HepG2 (cell line): ENCODE measurements at regions of chr15 and their contacts with region 1.

Region 1: GRCh38 chr15:32936283-32936918 is 218.6 kb downstream of the GREM1 start:
- DNase-seq: peak; percentile 16
- ATAC-seq: peak; percentile 68
- H3K4me3 ChIP-seq: no peak overlapping the region
- H3K27ac ChIP-seq: no peak overlapping the region
- H3K4me1 ChIP-seq: no peaks in the 10 kb centered on the region
- H3K27me3 ChIP-seq: no peaks in the 10 kb centered on the region
- CTCF ChIP-seq: peak; percentile 53
- EP300 ChIP-seq: no peak
- POLR2A ChIP-seq: no peak
- RAD21 ChIP-seq: no peak

Region 2: DNA sequence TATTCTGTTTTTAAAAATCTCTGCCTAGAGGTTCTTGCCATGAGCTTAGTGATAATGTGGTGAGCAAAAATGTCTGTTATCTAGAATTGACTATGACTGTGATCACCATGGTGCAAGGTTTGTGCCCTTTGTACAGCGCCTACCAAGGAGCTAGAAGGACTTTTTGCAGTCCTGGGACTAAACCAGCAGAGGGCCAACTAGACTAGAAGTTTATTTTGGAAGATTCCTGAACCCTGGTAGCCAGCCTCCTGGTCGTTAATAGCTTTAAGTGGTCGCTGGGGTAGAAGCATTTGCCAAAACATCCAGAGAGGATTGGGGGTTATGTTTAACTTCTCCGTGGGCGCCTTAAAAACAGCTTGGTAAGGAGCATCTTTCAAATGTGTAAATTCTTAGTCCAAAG is 287.1 kb before region 1 on chr15:
- CTCF ChIA-PET with region 1: interaction called, 3 read pairs
- POLR2A ChIA-PET with region 1: no interaction called
- in situ Hi-C with region 1: no loop called
- intact Hi-C with region 1: loop called (anchors 1 kb)
- DNase-seq: peak; percentile 63
- ATAC-seq: peak; percentile 90
- H3K4me3 ChIP-seq: no peak overlapping the region
- H3K27ac ChIP-seq: no peak overlapping the region
- H3K4me1 ChIP-seq: peaks cover 9% of the 10 kb centered on the region
- H3K27me3 ChIP-seq: no peaks in the 10 kb centered on the region; a peak in 1 of 5 replicates
- CTCF ChIP-seq: peak; percentile 53
- EP300 ChIP-seq: no peak
- POLR2A ChIP-seq: no peak
- RAD21 ChIP-seq: no peak

Region 3: DNA sequence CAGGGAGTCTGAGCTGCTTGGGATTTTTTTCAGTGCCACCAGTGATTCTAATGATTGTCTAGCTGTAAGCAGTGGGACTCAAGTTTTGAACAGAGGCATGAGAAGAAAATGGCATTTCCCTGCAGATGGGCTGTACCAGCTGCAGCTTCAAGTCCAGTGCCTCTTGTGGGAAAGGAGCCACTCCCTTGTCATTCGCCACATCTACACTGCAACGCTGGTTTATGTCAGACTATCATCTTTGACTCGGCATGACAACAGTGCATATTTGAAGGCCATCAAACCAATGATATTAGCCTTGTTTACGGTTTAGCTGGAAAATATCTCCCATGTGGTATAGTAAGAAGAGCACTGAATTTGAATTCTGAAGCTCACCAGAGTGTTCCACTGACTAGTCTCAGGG is 272.7 kb before region 1 on chr15:
- CTCF ChIA-PET with region 1: interaction called, 22 read pairs
- POLR2A ChIA-PET with region 1: no interaction called
- in situ Hi-C with region 1: loop called (anchors 5 kb)
- intact Hi-C with region 1: loop called (anchors 1 kb)
- DNase-seq: no peak
- ATAC-seq: no peak
- H3K4me3 ChIP-seq: no peak overlapping the region
- H3K27ac ChIP-seq: no peak overlapping the region
- H3K4me1 ChIP-seq: no peaks in the 10 kb centered on the region
- H3K27me3 ChIP-seq: no peaks in the 10 kb centered on the region
- CTCF ChIP-seq: no peak
- EP300 ChIP-seq: no peak
- POLR2A ChIP-seq: no peak
- RAD21 ChIP-seq: no peak

Region 4: GRCh38 chr15:32844118-32844711 is 92.2 kb before region 1 on chr15:
- CTCF ChIA-PET with region 1: interaction called, 3 read pairs
- POLR2A ChIA-PET with region 1: no interaction called
- in situ Hi-C with region 1: no loop called
- intact Hi-C with region 1: loop called (anchors 1 kb)
- DNase-seq: peak; percentile 30
- ATAC-seq: no peak
- H3K4me3 ChIP-seq: no peak overlapping the region
- H3K27ac ChIP-seq: no peak overlapping the region
- H3K4me1 ChIP-seq: peaks cover 3% of the 10 kb centered on the region
- H3K27me3 ChIP-seq: no peaks in the 10 kb centered on the region; a peak in 1 of 5 replicates
- CTCF ChIP-seq: peak; percentile 61
- EP300 ChIP-seq: no peak
- POLR2A ChIP-seq: no peak
- RAD21 ChIP-seq: no peak

Region 5: GRCh38 chr15:32884146-32884545 is 52.3 kb before region 1 on chr15:
- CTCF ChIA-PET with region 1: no interaction called
- POLR2A ChIA-PET with region 1: no interaction called
- in situ Hi-C with region 1: no loop called
- intact Hi-C with region 1: loop called (anchors 10 kb)
- DNase-seq: no peak
- ATAC-seq: no peak
- H3K4me3 ChIP-seq: no peak overlapping the region
- H3K27ac ChIP-seq: no peak overlapping the region
- H3K4me1 ChIP-seq: no peaks in the 10 kb centered on the region
- H3K27me3 ChIP-seq: no peaks in the 10 kb centered on the region
- CTCF ChIP-seq: no peak
- EP300 ChIP-seq: no peak
- POLR2A ChIP-seq: no peak
- RAD21 ChIP-seq: no peak